AG04450 (cell line): ENCODE measurements at regions of chr16 and their contacts with region 1.

Region 1: GRCh38 chr16:74296432-74297144 is at the start of gene PSMD7:
- DNase-seq: peak; percentile 61
- H3K4me3 ChIP-seq: peak within 1 kb of the TSS; percentile 94
- H3K27ac ChIP-seq: peak within 1 kb of the TSS; percentile 88
- H3K27me3 ChIP-seq: no peaks in the 10 kb centered on the region
- CTCF ChIP-seq: no peak
- polyA plus RNA-seq, gene PSMD7: 112 and 153 TPM in 2 replicates

Region 2: DNA sequence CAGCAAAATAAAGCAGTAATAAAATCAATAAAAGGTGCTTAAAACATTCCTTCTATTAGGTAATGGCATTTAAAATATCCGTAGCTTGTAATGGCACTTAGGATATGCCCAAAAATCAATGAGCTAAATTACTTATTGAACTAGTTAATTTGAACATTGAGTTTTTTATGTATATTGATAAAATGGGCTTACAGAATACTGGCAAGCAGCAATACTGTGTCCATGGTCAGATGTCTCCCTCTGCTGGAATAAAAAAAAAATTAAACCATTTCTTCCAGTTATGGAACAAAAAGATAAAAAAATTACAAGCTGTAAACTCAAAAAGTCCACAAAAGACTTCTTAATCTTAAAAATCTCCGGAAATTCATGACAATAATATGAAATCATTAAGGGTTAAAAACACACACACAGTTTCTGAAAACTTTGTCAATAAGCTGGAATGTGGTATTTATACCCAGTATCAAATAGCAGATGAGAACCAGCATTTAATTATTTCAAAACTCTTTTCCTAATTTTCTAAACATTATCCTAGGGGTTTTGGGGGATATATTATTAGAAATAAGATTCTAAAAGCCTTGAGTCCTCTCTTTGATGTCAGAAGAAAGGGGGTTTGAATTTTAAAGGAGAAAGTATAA is 21.5 kb before region 1 on chr16:
- CTCF ChIA-PET with region 1: interaction called, 12 read pairs
- POLR2A ChIA-PET with region 1: no interaction called
- DNase-seq: no peak
- H3K4me3 ChIP-seq: no peak overlapping the region
- H3K27ac ChIP-seq: no peak overlapping the region
- H3K27me3 ChIP-seq: no peaks in the 10 kb centered on the region
- CTCF ChIP-seq: peak; percentile 63

Region 3: DNA sequence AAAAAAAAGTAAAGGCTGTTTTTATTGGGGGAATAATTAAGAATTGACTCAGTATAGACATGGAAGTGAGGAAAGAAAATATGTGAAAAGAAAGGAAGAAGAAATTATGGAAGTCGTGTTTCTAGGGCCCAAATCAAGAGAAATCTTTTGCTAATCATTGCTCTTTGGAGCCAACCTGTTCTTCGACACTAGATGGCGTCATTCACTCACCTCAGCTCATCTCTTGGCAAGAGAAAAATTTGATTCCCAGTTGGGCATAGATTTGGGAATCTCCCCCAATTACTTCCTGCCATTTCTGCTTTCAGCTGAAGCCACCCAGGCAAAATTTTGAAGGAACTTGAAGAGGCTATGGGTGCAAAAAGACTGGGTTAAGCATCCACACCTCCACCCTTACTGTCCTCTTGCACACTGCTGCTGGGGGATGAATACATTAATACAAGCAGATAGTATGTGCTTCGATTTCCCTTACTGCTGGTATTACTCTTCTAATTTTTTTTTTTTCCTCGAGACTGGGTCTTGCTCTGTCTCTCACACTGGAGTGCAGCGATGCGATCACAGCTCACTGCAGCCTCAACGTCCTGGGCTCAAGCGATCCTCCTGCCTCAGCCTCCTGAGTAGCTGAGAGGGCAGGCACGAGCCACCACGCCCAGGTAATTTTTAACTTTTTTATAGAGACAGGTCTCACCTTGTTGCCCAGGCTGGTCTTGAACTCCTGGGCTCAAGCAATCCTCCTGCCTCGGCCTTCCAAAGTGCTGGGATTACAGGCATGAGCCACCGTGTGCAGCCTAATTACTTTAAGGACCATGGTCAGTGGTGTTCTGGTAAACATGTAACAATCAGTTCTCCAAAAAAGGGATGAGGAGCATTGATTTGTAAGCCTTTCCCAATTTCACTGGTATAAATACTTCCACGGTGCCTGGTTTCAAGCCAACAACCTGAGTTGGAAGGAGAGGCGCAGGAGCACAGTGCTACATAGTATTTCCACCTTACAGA is 13.5 kb after region 1 on chr16:
- CTCF ChIA-PET with region 1: interaction called, 19 read pairs
- POLR2A ChIA-PET with region 1: no interaction called
- DNase-seq: peak; percentile 23
- H3K4me3 ChIP-seq: no peak overlapping the region
- H3K27ac ChIP-seq: no peak overlapping the region
- H3K27me3 ChIP-seq: no peaks in the 10 kb centered on the region
- CTCF ChIP-seq: peak; percentile 81